ENCODE measurements at regions of chr1 and their contacts with region 1.

Region 1: GRCh38 chr1:24541711-24542346 is 14.1 kb upstream of the NCMAP start:
- DNase-seq: peak; percentile 51
- H3K4me3 Mint-ChIP-seq: peak overlapping the region; percentile 40
- H3K27ac Mint-ChIP-seq: peak overlapping the region; percentile 84
- H3K4me1 Mint-ChIP-seq: peaks cover 50% of the 10 kb centered on the region
- H3K27me3 Mint-ChIP-seq: no peaks in the 10 kb centered on the region
- CTCF ChIP-seq: peak; percentile 77

Region 2: DNA sequence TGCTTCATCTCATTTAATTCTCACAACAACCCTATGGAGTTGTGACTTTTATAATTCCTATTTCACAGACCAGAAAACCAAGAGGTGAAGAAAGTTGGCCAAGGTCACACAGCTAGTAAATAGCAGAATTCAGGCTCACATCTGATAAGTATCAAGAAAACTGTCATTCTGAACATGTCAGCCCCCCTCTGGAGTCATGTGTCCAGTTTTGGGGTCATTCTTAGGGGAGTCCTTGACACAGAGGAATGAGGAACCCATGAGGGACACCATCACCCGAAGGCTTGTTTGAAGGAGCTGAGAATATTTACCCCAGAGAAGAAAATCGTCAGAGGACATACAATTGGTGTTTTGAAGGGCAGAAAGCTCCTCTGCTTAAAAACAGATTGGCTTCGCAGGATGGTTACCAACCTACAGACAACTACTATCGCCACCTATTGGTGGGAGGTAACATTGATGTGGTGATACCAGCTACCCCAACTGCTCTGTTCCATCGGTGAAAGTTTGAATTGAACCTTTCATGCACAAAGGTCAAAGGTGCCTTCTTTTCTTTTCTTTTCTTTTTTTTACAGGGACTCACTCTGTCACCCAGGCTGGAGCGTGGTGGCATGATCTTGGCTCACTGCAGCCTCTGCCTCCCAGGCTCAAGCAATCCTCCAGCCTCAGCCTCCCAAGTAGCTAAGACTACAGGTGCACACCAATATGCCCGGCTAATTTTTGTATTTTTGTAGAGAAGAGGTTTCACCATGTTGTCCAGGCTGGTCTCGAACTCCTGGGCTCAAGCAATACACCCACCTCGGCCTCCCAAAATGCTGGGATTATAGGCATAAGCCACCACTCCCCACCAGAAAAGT is 45.4 kb after region 1 on chr1:
- CTCF ChIA-PET with region 1: interaction called, 18 read pairs
- intact Hi-C with region 1: loop called (anchors 10 kb)
- DNase-seq: peak; percentile 46
- H3K4me3 Mint-ChIP-seq: no peak overlapping the region
- H3K27ac Mint-ChIP-seq: no peak overlapping the region
- H3K4me1 Mint-ChIP-seq: peaks cover 19% of the 10 kb centered on the region
- H3K27me3 Mint-ChIP-seq: no peaks in the 10 kb centered on the region
- CTCF ChIP-seq: peak; percentile 48

Region 3: DNA sequence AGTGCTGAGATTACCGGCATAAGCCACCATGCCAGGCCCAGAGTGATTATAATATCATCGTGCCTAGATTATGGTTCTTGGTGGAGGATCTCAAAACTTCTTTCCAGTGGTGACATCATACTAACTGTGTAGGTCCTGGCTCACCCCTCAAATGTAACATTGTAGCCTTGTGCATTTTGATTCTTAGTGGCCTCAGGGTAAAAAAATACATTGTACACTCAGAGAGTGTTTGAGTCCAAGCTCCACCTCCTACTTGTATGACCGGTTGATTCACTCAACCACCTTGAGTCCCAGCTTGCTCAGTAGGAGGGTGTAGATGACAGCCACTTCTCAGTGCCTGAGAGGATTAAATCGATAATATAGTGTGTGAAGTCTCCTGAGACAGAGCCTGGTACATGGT is 52.3 kb after region 1 on chr1:
- CTCF ChIA-PET with region 1: interaction called, 4 read pairs
- intact Hi-C with region 1: loop called (anchors 10 kb)
- DNase-seq: peak; percentile 37
- H3K4me3 Mint-ChIP-seq: no peak overlapping the region
- H3K27ac Mint-ChIP-seq: peak overlapping the region; percentile 64
- H3K4me1 Mint-ChIP-seq: peaks cover 19% of the 10 kb centered on the region
- H3K27me3 Mint-ChIP-seq: no peaks in the 10 kb centered on the region
- CTCF ChIP-seq: no peak

Region 4: DNA sequence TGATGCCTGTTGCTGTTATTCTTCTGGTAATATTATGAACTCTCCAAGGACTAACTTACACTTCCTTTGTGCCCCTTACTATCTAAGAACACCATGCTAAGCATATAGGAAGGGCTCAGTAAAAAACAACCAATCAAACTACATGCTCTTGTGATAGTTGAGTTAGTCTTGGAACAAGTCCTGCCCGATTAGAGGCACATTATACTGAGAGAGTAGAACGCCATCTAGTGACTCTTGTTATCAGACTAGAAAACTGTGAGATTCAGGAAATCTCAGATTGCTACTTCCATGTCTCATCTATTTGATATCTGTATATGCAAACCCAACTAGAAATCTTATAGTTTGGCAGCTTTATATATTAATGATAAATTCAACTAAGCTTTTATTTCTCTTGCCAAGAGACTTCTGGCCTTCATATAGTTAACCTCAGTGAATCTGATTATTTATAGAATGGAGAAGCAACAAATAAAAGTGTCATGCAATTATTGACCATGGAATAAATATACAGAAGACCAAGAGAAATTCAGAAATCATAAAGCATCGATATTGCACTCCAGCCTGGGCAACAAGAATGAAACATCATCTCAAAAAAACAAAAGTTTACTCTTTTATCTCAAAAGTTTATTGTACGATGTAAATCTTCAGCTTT is 93.5 kb after region 1 on chr1:
- CTCF ChIA-PET with region 1: interaction called, 3 read pairs
- intact Hi-C with region 1: loop called (anchors 5 kb)
- DNase-seq: no peak
- H3K4me3 Mint-ChIP-seq: no peak overlapping the region
- H3K27ac Mint-ChIP-seq: no peak overlapping the region
- H3K4me1 Mint-ChIP-seq: peaks cover 12% of the 10 kb centered on the region
- H3K27me3 Mint-ChIP-seq: no peaks in the 10 kb centered on the region
- CTCF ChIP-seq: no peak